Calu3 (cell line): ENCODE measurements at regions of chr15 and their contacts with region 1.

Region 1: GRCh38 chr15:44501768-44502366 is 35.1 kb upstream of the EIF3J start:
- DNase-seq: no peak
- H3K4me3 Mint-ChIP-seq: no peak overlapping the region
- H3K27ac Mint-ChIP-seq: no peak overlapping the region
- H3K4me1 Mint-ChIP-seq: no peaks in the 10 kb centered on the region
- H3K27me3 Mint-ChIP-seq: no peaks in the 10 kb centered on the region
- CTCF ChIP-seq: no peak

Region 2: DNA sequence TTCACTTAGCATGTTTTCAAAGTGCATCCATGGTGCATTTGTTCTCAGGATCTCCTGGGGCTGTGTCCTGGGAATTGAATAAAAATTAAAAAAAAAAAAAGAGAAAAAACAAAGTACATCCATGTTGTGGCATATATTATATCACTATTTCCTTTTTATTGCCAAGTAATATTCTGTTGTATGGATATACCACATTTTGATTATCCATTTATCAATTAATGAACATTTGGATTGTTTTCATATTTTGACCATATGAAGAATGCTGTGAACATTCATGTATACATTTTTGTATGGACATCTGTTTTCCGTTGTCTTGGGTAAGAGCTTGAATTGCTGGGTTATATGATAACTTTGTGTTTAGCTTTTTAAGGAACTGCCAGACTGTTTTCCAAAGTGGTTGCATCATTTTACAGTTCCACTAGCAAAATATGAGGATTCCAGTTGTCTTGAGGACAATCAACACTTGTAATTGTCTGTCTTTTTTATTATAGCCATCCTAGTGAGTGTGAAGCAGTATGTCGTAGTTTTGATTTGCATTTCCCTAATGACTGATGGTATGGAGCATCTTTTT is 29.9 kb before region 1 on chr15:
- CTCF ChIA-PET with region 1: no interaction called
- intact Hi-C with region 1: loop called (anchors 2 kb)
- DNase-seq: no peak
- H3K4me3 Mint-ChIP-seq: no peak overlapping the region
- H3K27ac Mint-ChIP-seq: no peak overlapping the region
- H3K4me1 Mint-ChIP-seq: no peaks in the 10 kb centered on the region
- H3K27me3 Mint-ChIP-seq: no peaks in the 10 kb centered on the region
- CTCF ChIP-seq: no peak